Aorta (tissue), 5 donors: ENCODE measurements at regions of chr14 and their contacts with region 1.

Region 1: GRCh38 chr14:21039585-21040369 is 2.4 kb upstream of the RNASE7 start:
- DNase-seq: peak in 1 of 2 donors; percentile 56
- ATAC-seq: peak; percentile 84
- H3K4me3 ChIP-seq: no peak overlapping the region
- H3K27ac ChIP-seq: peak overlapping the region in 1 of 2 donors; percentile 17
- H3K4me1 ChIP-seq: no peaks in the 10 kb centered on the region
- H3K27me3 ChIP-seq: no peaks in the 10 kb centered on the region

Region 2: DNA sequence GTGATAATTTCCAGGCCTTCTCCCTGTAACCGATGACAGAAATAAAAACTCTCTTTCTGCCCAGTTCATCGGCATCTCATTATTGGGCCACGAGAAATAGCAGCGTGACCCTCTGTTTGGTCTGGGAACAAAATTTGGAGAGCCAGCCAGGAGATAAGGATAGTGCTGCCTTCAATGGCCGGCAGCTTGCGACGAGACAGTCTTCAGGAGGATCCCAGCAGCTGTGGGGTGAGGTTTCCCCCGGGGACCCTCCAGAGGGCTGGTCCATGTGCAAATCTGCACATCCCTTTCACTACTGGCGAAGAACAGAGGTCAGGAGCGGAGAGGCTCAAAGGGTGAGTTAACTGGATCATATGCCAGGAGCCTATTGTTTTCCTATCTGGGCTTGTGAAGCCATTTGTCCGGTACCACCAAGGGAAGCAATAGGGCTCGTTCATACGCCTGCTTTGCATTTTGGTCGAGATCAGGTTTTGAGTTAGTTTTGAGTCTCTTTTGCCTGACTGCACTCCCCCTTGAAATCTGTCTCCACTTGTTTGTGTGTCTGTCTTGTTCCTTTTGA is 35.9 kb before region 1 on chr14:
- intact Hi-C with region 1: loop called in 1 of 2 experiments (anchors 5 kb)
- DNase-seq: no peak
- ATAC-seq: no peak
- H3K4me3 ChIP-seq: no peak overlapping the region
- H3K27ac ChIP-seq: no peak overlapping the region
- H3K4me1 ChIP-seq: no peaks in the 10 kb centered on the region
- H3K27me3 ChIP-seq: no peaks in the 10 kb centered on the region

Region 3: DNA sequence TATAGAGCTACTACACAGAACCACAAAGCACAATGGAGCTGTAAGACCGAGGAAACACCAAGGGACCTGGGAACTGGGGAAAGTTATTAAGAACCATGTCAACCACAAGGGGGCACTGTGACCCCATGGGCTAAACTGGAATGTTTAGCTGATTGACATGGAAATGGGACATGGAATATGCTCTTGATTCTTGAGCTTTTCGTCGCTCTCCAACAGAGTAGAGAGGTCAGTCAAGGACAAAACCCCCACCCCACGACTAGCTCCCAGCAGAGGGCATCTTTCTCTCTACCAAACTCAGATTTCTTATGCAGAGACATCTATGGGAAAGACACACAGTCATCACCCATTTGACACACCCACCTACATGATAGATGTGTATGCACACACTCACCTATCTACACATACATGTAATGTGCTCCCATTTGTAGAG is 25.0 kb before region 1 on chr14:
- intact Hi-C with region 1: loop called (anchors 1 kb)
- DNase-seq: peak; percentile 87 to 90
- ATAC-seq: peak; percentile 88
- H3K4me3 ChIP-seq: no peak overlapping the region
- H3K27ac ChIP-seq: no peak overlapping the region
- H3K4me1 ChIP-seq: no peaks in the 10 kb centered on the region
- H3K27me3 ChIP-seq: no peaks in the 10 kb centered on the region